H1 (cell line): ENCODE measurements at regions of chr5 and their contacts with region 1.

Region 1: DNA sequence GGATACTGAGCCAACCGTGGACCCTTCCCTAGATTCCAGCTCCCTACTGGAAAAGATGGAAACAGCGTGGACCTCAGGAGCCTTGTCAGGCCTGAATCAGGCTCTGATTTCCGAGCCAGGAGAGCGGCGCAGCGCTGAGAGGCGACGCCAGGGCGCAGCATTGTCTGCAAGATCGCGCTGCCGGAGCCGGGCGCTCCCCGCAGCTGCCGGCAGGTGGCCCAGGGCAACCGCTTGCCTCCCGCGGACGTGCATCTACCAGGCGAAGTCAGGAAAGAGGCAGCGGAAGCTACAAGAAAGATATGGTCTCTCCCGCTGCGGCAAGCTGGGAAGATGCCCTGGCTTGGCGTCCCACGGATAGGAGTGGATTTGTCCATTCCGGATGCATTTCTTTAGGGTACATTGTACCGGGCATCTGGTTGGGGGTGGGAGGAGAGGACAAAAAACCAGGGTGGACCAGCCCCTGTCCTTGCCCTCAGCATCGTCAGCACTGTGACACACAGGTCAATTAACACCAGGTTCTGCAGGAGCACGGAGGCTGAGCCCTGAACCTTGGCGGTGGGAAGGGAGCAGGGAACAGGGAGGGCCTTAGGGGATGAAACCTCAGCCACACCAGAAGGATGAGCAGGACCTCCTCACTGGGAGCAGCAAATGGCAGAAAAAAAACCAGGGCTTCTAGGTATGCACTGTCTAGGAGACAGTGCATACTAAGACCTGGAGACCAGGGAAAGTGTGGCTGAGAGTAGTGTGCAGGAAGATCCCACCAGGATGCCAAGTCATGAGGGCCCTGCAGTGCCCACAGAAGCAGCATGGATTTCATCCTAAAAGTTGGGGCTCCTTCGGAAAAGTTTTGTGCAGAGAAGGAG is 55.9 kb downstream of the SFXN1 start:
- DNase-seq: peak; percentile 82 to 91
- H3K4me3 ChIP-seq: peak overlapping the region in 3 of 4 experiments; percentile 7 to 33 (median 14); a peak in 3 of 8 replicates
- H3K27ac ChIP-seq: no peak overlapping the region
- H3K4me1 ChIP-seq: peaks cover 0 to 17% (median 11%) of the 10 kb centered on the region in 4 experiments; a peak in 6 of 7 replicates
- H3K27me3 ChIP-seq: no peaks in the 10 kb centered on the region
- CTCF ChIP-seq: peak; percentile 100
- EP300 ChIP-seq: peak in 1 of 2 experiments; percentile 55; a peak in 1 of 3 replicates
- POLR2A ChIP-seq: no peak
- RAD21 ChIP-seq: peak; percentile 100

Region 2: GRCh38 chr5:175556777-175557176 is 22.5 kb after region 1 on chr5:
- CTCF ChIA-PET with region 1: interaction called, 35 read pairs
- POLR2A ChIA-PET with region 1: interaction called, 4 read pairs
- DNase-seq: no peak
- H3K4me3 ChIP-seq: no peak overlapping the region
- H3K27ac ChIP-seq: no peak overlapping the region
- H3K4me1 ChIP-seq: peaks cover 5 to 14% (median 10%) of the 10 kb centered on the region in 4 experiments; a peak in 6 of 7 replicates
- H3K27me3 ChIP-seq: no peaks in the 10 kb centered on the region
- CTCF ChIP-seq: no peak
- EP300 ChIP-seq: no peak
- POLR2A ChIP-seq: no peak
- RAD21 ChIP-seq: no peak

Region 3: DNA sequence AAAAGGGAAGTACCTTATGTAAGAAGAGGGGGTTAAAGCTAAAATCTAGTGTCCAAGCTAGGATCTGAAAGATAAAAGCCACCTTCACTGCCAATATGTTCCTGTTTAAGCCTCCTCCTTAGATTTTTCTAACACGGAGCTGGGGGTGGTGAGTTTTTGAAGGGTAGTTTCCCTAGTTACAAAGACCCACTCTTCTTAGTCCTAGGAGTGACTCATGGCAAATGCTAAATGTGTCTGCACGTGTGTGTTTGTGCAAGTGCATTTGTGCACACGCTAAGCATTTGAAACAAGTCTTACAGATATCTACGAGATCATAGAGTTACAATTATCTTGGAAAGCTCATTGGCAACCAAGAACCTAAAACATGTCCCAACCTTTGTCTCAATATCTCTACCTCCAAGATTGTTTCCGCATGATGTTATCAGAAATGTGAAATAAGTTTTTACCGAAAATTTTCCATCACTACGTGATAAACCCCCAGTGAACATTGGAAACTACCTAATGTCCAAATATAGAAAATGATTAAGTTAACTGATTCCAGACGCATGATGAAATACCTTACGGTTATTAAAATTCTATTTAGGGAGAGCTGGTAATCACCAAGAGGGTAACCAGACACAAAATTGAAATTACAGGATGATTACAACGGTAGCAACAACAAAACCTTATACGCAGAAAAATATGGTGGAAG is 45.6 kb after region 1 on chr5:
- CTCF ChIA-PET with region 1: interaction called, 18 read pairs
- POLR2A ChIA-PET with region 1: no interaction called
- DNase-seq: no peak
- H3K4me3 ChIP-seq: no peak overlapping the region
- H3K27ac ChIP-seq: no peak overlapping the region
- H3K4me1 ChIP-seq: no peaks in the 10 kb centered on the region
- H3K27me3 ChIP-seq: peaks cover 0 to 4% (median 0%) of the 10 kb centered on the region in 4 experiments; a peak in 1 of 7 replicates
- CTCF ChIP-seq: no peak
- EP300 ChIP-seq: no peak
- POLR2A ChIP-seq: no peak
- RAD21 ChIP-seq: no peak

Region 4: DNA sequence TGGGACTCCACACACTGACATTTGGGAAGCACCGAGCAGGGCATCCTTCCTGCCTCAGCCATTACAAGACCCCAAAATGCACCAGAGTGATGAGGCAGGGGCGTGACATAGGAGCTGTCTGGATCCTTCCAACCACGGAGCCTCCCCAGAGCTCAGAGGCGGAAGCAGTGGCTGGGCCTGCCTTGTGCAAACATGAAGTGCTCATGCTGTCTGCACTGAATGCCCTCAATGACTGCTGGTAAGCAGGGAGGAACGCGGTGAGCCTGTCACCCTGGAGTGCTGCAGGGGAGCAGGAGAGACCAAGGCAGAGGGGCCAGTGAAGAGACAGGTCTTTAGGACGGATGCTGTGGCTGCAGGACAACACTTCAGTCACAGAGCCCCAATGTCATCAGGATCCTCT is 63.4 kb after region 1 on chr5:
- CTCF ChIA-PET with region 1: no interaction called
- POLR2A ChIA-PET with region 1: no interaction called
- DNase-seq: no peak
- H3K4me3 ChIP-seq: no peak overlapping the region
- H3K27ac ChIP-seq: no peak overlapping the region
- H3K4me1 ChIP-seq: peaks cover 0 to 7% (median 2%) of the 10 kb centered on the region in 4 experiments; a peak in 5 of 7 replicates
- H3K27me3 ChIP-seq: no peaks in the 10 kb centered on the region
- CTCF ChIP-seq: no peak
- EP300 ChIP-seq: no peak
- POLR2A ChIP-seq: no peak
- RAD21 ChIP-seq: no peak

Region 5: GRCh38 chr5:175617447-175617846 is 83.1 kb after region 1 on chr5:
- CTCF ChIA-PET with region 1: interaction called, 23 read pairs
- POLR2A ChIA-PET with region 1: no interaction called
- DNase-seq: peak in 1 of 2 experiments; percentile 57
- H3K4me3 ChIP-seq: no peak overlapping the region
- H3K27ac ChIP-seq: no peak overlapping the region
- H3K4me1 ChIP-seq: no peaks in the 10 kb centered on the region; a peak in 2 of 7 replicates
- H3K27me3 ChIP-seq: no peaks in the 10 kb centered on the region
- CTCF ChIP-seq: peak; percentile 59 to 68 (median 63)
- EP300 ChIP-seq: no peak
- POLR2A ChIP-seq: no peak
- RAD21 ChIP-seq: peak; percentile 64 to 78

Region 6: DNA sequence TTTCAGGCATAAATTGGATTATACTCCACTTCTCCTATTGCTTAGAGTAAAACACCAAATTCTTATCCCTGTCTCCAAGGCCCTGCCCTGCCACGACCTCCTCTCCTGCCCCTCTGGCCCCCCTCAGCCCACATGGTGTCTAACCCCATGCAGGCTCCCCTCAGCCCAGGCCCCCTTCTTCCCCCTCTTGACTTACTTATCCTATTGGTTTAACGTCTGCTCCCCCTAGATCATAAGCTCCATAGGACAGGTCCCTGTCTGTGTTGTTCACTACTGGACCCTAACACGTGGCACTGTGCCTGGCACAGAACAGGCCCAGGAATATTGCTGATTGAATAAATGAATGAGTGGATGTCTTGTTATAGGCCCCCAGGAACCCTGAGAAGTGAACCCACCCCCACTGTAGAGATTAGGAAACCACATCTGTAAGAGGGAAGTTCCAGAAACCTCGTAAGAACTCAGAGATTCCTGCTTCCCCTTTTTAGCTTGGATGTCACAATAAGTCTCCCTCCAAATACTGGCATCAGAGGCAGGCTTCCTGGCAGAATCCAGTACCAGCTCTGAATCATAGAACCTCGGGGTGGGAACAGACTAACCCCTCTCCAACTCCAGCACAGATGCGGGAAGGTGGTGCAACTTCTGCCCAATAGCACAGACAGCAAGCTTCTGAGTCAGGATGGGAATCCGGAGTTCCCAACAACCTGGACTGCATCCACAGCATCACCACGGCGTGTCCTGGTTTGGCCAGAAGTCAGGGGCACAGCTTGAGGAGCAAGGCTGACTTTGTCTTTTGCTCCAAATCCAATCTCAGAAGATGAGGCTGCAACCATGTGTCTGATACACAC is 155.1 kb after region 1 on chr5:
- CTCF ChIA-PET with region 1: interaction called, 79 read pairs
- POLR2A ChIA-PET with region 1: no interaction called
- DNase-seq: no peak
- H3K4me3 ChIP-seq: no peak overlapping the region
- H3K27ac ChIP-seq: no peak overlapping the region
- H3K4me1 ChIP-seq: peaks cover 0 to 8% (median 3%) of the 10 kb centered on the region in 4 experiments; a peak in 3 of 7 replicates
- H3K27me3 ChIP-seq: no peaks in the 10 kb centered on the region
- CTCF ChIP-seq: no peak
- EP300 ChIP-seq: no peak
- POLR2A ChIP-seq: no peak
- RAD21 ChIP-seq: no peak

Region 7: GRCh38 chr5:175718401-175719108 is 184.3 kb after region 1 on chr5:
- CTCF ChIA-PET with region 1: interaction called, 199 read pairs
- POLR2A ChIA-PET with region 1: interaction called, 3 read pairs
- DNase-seq: peak in 1 of 2 experiments; percentile 82
- H3K4me3 ChIP-seq: no peak overlapping the region
- H3K27ac ChIP-seq: no peak overlapping the region
- H3K4me1 ChIP-seq: no peaks in the 10 kb centered on the region
- H3K27me3 ChIP-seq: no peaks in the 10 kb centered on the region
- CTCF ChIP-seq: peak; percentile 72 to 90 (median 74)
- EP300 ChIP-seq: no peak
- POLR2A ChIP-seq: no peak
- RAD21 ChIP-seq: peak; percentile 89 to 92

Region 8: GRCh38 chr5:175750511-175750931 is 216.2 kb after region 1 on chr5:
- CTCF ChIA-PET with region 1: no interaction called
- POLR2A ChIA-PET with region 1: no interaction called
- DNase-seq: peak in 1 of 2 experiments; percentile 45
- H3K4me3 ChIP-seq: no peak overlapping the region
- H3K27ac ChIP-seq: no peak overlapping the region
- H3K4me1 ChIP-seq: peaks cover 0 to 6% (median 2%) of the 10 kb centered on the region in 4 experiments; a peak in 3 of 7 replicates
- H3K27me3 ChIP-seq: no peaks in the 10 kb centered on the region
- CTCF ChIP-seq: no peak
- EP300 ChIP-seq: no peak
- POLR2A ChIP-seq: no peak
- RAD21 ChIP-seq: no peak